HepG2 (cell line): ENCODE measurements at regions of chr3 and their contacts with region 1.

Region 1: DNA sequence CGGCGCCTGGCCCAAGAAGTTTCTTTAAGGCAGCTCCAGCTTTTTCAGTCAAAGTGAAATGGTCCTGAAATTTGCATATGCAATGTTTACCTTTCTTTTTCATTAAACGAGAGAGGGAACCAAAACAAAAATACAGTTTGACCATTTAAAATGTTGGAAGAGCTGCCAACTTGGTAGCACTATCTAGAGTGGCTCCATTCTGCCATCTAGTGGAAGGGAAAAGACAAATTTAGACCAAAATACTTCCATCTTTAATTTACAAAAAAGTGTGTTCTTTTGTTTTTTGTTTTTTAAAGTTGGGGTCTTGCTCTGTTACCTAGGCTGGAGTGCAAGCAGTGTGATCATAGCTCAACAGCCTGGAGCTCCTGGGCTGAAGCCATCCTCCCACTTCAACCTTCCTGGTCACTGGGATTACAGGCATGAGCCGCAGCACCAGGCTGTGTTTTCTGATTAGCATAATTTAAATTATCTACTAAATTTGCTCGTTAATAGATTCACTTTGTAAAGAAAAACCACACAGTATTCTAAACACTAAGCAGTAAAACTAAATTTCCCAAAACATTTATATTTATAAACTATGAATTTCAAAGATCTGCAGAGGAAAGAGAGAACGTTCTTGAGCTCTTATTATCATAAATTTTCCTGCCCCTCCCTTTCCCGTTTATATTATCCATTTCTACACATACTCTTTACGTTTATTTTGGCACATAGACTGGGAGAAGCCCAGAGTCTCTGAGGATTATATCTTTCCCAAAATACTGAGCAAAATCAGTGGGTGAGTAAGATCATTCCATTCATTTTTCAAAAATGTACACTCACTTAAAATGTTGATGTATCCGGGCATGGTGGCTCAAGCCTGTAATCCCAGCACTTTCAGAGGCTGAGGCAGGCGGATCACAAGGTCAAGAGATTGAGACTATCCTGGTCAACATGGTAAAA is 15.4 kb upstream of the RFC4 start:
- DNase-seq: peak; percentile 56
- ATAC-seq: no peak
- H3K4me3 ChIP-seq: no peak overlapping the region
- H3K27ac ChIP-seq: no peak overlapping the region
- H3K4me1 ChIP-seq: peaks cover 59% of the 10 kb centered on the region
- H3K27me3 ChIP-seq: peaks cover 0 to 26% of the 10 kb centered on the region in 2 experiments
- CTCF ChIP-seq: peak; percentile 69
- EP300 ChIP-seq: no peak
- POLR2A ChIP-seq: no peak
- RAD21 ChIP-seq: 0 out of 2 replicates have a peak, but pooled peaks have one; percentile 52

Region 2: DNA sequence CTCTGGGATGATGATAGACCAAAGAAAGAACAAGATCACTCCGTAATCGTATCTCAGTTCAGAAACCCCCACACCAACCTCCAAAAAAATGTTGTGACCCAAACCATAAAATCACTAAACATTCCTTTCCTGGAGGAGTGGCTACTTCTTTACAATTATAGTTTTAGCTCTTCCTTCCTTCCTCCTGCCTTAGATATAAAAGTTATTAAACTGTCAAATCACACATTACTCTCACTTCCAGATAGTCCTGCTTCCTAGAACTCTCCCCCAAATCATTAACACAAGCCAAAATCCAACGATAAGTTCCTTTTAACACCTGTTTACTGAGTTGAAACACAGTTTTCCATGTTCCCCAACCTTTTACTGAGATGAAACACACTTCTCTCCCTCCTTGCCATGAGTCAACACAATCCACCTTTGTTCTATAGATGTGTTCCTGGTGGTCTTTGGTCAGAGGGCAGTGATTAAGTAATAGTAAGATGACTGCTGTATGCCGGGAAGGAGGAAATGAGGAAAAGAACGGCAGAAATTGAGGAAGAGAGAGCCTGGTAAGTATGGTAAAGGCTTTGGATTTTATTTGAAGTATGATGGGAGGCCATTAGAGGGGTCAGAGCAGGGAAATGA is 269.2 kb before region 1 on chr3:
- CTCF ChIA-PET with region 1: no interaction called
- POLR2A ChIA-PET with region 1: interaction called, 3 read pairs
- in situ Hi-C with region 1: no loop called
- intact Hi-C with region 1: loop called (anchors 2 kb)
- DNase-seq: peak; percentile 68
- ATAC-seq: peak; percentile 51
- H3K4me3 ChIP-seq: no peak overlapping the region
- H3K27ac ChIP-seq: peak overlapping the region; percentile 56
- H3K4me1 ChIP-seq: peaks cover 21% of the 10 kb centered on the region
- H3K27me3 ChIP-seq: no peaks in the 10 kb centered on the region
- CTCF ChIP-seq: no peak
- EP300 ChIP-seq: peak in 1 of 2 experiments; percentile 84; a peak in 2 of 4 replicates
- POLR2A ChIP-seq: no peak
- RAD21 ChIP-seq: no peak

Region 3: GRCh38 chr3:187064196-187065115 is 242.8 kb after region 1 on chr3:
- CTCF ChIA-PET with region 1: no interaction called
- POLR2A ChIA-PET with region 1: no interaction called
- in situ Hi-C with region 1: no loop called
- intact Hi-C with region 1: no loop called
- DNase-seq: peak; percentile 65
- ATAC-seq: no peak
- H3K4me3 ChIP-seq: no peak overlapping the region
- H3K27ac ChIP-seq: peak overlapping the region; percentile 73
- H3K4me1 ChIP-seq: peaks cover 77% of the 10 kb centered on the region
- H3K27me3 ChIP-seq: no peaks in the 10 kb centered on the region
- CTCF ChIP-seq: no peak
- EP300 ChIP-seq: no peak
- POLR2A ChIP-seq: no peak
- RAD21 ChIP-seq: no peak